ENCODE measurements at regions of chr13 and their contacts with region 1.

Region 1: DNA sequence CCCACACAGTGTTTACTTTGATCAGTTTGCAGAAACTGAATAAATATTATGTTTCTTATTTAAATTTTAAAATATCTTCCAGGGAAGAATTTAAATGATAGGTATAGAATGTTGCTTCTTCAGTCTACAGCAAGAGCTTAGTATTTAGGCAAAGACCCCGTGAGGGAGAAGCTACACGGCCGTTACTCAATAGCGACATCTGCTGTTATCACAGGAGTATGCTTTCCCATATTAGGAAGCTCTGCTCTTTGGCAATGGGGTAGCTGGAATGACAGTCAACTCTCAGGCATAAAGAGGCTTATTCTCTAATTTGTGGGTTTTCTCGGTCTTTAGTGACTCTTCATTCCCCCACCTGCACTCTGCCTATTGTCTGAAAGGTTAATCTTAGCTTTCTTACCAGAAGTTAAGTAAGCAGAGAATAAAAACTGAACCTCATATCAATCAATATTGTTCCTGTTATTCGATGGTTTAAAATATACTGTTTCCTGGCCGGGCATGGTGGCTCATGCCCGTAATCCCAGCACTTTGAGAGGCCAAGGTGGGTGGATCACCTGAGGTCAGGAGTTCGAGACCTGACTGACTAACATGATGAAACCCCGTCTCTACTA is 13.2 kb upstream of the LHFPL6 start:
- DNase-seq: peak; percentile 73
- CTCF ChIP-seq: peak; percentile 77

Region 2: GRCh38 chr13:38641164-38641951 is 974.8 kb before region 1 on chr13:
- CTCF ChIA-PET with region 1: no interaction called
- POLR2A ChIA-PET with region 1: no interaction called
- DNase-seq: no peak
- CTCF ChIP-seq: no peak

Region 3: GRCh38 chr13:39012608-39013007 is 603.6 kb before region 1 on chr13:
- CTCF ChIA-PET with region 1: no interaction called
- POLR2A ChIA-PET with region 1: no interaction called
- DNase-seq: no peak
- CTCF ChIP-seq: no peak

Region 4: DNA sequence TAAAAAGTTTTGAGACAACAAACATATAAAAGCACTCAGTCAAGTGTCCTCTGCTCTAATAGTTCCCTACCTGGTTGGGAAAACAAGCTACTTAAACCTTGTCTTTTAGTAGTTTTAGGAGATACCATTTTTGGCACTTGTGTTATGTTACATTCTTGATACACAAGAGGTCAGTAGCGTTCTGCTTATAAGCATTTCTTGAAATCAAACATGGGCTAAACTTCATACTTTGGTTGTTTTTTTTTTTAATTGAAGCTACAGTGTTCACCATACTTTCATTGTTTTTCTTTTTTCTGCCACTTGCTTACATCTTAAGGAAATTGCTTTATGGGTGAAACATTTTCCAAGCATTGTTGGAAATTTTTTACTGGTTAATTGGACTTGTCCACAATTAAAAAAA is 565.0 kb before region 1 on chr13:
- CTCF ChIA-PET with region 1: interaction called, 12 read pairs
- POLR2A ChIA-PET with region 1: no interaction called
- DNase-seq: peak; percentile 23
- CTCF ChIP-seq: peak; percentile 46

Region 5: DNA sequence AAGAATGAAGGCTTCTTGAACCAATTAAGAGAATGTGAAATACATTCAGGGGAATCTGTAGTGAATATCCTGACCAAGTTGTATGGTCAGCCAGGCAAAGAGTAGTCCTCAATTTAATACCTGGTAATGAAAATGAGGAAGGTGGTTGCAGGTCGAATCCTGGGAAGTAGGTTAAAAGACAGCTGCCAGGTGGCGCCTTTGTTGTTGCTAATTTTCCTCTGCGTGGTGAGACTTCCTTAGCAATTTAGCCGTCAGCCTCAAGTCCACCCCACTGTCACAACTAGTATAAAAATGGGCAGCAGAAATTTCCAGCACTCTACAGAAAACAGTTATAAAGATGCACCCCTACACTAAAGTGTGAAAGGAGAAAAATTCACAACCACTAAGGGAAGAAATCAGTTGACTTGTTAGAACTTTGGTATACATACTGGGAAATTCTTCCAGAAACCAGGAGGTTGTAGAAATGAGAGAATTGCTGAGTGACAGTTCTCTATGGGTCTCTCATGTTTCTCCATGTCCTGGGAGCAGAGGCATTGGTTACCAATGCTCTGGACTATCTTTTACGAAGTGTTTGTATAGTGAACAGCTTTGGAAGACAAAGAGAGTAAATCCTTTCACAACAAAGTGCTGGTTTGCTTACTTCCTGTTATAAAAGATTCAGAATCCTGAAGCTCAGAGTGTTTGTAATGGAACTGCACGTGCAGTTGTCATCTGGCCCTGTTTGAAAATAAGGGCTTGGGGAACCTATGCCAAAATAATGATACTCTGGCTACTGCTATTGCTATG is 342.0 kb before region 1 on chr13:
- CTCF ChIA-PET with region 1: interaction called, 23 read pairs
- POLR2A ChIA-PET with region 1: no interaction called
- DNase-seq: no peak
- CTCF ChIP-seq: peak; percentile 49

Region 6: DNA sequence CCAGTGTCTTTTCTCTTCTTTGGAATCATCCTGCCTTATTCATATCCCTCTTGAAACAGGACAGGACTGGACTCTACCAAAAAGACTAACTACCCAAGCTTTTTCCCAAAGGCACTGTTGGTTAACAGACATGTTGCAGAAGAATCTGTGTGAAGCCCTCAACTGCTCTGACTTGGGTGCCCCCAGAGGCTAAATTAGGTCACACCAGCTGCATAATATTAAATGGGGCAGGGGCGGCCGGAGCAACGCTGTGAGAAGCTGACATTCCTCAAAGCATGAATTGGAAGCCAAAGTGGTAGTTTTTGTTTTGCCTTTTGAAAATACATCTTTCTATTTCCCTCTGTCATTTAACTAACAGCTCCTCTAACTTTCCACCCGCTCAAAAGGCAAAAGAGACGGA is 199.1 kb before region 1 on chr13:
- CTCF ChIA-PET with region 1: interaction called, 10 read pairs
- POLR2A ChIA-PET with region 1: no interaction called
- DNase-seq: no peak
- CTCF ChIP-seq: no peak

Region 7: DNA sequence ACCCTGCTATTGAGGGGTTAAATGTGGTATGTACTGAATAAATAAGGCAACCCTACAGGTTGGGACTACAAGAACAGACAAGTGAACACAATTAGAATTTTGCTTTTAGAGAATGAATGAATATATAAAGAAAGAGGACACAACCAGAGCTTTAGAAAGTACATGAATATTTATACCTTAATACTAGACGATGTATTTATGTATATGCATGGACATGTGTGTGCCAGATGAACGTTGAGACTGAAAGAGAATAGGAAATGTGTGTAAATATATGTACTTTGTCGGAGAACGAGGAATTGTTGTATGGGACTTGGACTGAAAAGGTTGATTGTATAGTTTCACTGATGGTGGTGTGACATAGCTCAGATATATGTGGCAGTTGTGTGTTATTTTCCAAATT is 29.9 kb after region 1 on chr13:
- CTCF ChIA-PET with region 1: interaction called, 13 read pairs
- POLR2A ChIA-PET with region 1: no interaction called
- DNase-seq: no peak
- CTCF ChIP-seq: no peak

Measured in GM10248 (cell line).